ENCODE measurements at regions of chr5 and their contacts with region 1.

Region 1: GRCh38 chr5:6820851-6821479 is 107.7 kb downstream of the TENT4A start:
- DNase-seq: peak; percentile 74
- H3K4me3 Mint-ChIP-seq: no peak overlapping the region
- H3K27ac Mint-ChIP-seq: no peak overlapping the region
- H3K4me1 Mint-ChIP-seq: peaks cover 13% of the 10 kb centered on the region
- H3K27me3 Mint-ChIP-seq: peaks cover 42% of the 10 kb centered on the region

Region 2: DNA sequence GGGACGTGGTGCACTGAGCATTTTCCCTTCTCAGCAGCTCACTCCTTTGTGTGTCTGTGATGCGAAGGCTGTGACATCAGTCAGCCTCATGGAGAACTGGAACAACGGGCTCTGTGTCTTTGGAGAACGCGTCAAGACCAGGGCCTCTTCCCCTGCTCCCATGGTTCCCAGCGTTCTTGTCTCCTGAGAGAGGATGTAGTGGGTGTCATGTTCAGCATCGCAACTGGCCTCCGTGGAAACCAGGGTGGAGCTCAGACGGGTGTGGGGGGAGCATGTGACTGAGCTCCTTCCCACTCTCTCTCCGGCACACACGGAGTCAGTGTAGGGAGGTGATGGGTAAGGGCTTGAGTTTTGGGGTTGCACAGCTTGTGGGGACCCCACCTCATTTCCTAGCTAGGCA is 48.1 kb before region 1 on chr5:
- CTCF ChIA-PET with region 1: no interaction called
- DNase-seq: no peak
- H3K4me3 Mint-ChIP-seq: no peak overlapping the region
- H3K27ac Mint-ChIP-seq: no peak overlapping the region
- H3K4me1 Mint-ChIP-seq: peaks cover 11% of the 10 kb centered on the region
- H3K27me3 Mint-ChIP-seq: peaks cover 63% of the 10 kb centered on the region

Region 3: GRCh38 chr5:6837519-6838110 is 16.6 kb after region 1 on chr5:
- CTCF ChIA-PET with region 1: interaction called, 23 read pairs
- DNase-seq: peak; percentile 60
- H3K4me3 Mint-ChIP-seq: no peak overlapping the region
- H3K27ac Mint-ChIP-seq: no peak overlapping the region
- H3K4me1 Mint-ChIP-seq: peaks cover 28% of the 10 kb centered on the region
- H3K27me3 Mint-ChIP-seq: peaks cover 20% of the 10 kb centered on the region

Region 4: GRCh38 chr5:6989230-6989629 is 168.3 kb after region 1 on chr5:
- CTCF ChIA-PET with region 1: no interaction called
- DNase-seq: no peak
- H3K4me3 Mint-ChIP-seq: no peak overlapping the region
- H3K27ac Mint-ChIP-seq: no peak overlapping the region
- H3K4me1 Mint-ChIP-seq: no peaks in the 10 kb centered on the region
- H3K27me3 Mint-ChIP-seq: peaks cover 3% of the 10 kb centered on the region

Region 5: DNA sequence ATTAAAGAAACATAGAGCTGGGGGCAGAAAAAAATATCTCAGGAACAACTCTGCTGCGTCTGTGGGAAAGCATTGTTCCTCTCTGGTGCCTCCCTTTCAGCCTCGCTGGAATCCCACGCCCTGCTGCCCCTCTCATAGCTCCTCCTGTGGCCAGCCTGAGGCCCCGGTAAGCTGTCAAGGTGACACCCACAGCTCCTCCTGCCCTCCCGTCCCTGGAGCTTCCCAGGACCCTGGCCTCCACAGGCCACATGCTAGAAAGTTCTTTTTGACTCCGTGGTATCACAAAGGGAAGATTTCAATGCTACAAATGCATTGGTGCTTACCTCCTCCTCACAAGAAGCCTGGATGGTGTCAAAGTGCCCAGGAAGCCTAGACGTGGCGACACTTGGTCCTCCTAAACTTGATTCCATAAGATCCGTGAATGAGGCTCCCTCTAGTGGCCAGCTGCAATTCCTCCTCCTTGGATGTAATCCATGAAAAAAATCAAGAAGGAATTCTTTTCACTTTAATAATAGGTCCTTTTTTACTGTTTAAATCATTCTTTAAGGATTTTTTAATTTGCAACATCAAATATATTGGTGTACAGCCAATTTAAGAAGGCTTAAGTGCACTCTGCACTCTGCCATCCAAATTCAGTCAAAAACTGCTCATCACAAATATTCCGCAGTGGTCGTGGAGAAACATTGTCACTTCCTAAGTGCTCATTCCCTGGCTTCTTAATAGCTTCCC is 925.1 kb after region 1 on chr5:
- CTCF ChIA-PET with region 1: interaction called, 17 read pairs
- DNase-seq: peak; percentile 63
- H3K4me3 Mint-ChIP-seq: no peak overlapping the region
- H3K27ac Mint-ChIP-seq: no peak overlapping the region
- H3K4me1 Mint-ChIP-seq: no peaks in the 10 kb centered on the region
- H3K27me3 Mint-ChIP-seq: peaks cover 3% of the 10 kb centered on the region

Measured in activated naive CD4-positive, alpha-beta T cell treated with anti-CD3 and anti-CD28 coated beads, Interleukin-2, amount 10 ng/mL, durations not matched to agents 7 days and 5 days (primary cell).